Esophagus muscularis mucosa (tissue), 4 donors: ENCODE measurements at regions of chr2 and their contacts with region 1.

Region 1: GRCh38 chr2:85728883-85729824 is 24.6 kb upstream of the ATOH8 start:
- DNase-seq: peak; percentile 98
- H3K4me3 ChIP-seq: no peak overlapping the region
- H3K27ac ChIP-seq: peak overlapping the region in 2 of 4 donors; percentile 0 to 30
- H3K4me1 ChIP-seq: peaks cover 21 to 33% (median 28%) of the 10 kb centered on the region in 4 donors
- H3K27me3 ChIP-seq: no peaks in the 10 kb centered on the region
- CTCF ChIP-seq: peak; percentile 94 to 98 (median 98)
- EP300 ChIP-seq: no peak
- POLR2A ChIP-seq: no peak

Region 2: DNA sequence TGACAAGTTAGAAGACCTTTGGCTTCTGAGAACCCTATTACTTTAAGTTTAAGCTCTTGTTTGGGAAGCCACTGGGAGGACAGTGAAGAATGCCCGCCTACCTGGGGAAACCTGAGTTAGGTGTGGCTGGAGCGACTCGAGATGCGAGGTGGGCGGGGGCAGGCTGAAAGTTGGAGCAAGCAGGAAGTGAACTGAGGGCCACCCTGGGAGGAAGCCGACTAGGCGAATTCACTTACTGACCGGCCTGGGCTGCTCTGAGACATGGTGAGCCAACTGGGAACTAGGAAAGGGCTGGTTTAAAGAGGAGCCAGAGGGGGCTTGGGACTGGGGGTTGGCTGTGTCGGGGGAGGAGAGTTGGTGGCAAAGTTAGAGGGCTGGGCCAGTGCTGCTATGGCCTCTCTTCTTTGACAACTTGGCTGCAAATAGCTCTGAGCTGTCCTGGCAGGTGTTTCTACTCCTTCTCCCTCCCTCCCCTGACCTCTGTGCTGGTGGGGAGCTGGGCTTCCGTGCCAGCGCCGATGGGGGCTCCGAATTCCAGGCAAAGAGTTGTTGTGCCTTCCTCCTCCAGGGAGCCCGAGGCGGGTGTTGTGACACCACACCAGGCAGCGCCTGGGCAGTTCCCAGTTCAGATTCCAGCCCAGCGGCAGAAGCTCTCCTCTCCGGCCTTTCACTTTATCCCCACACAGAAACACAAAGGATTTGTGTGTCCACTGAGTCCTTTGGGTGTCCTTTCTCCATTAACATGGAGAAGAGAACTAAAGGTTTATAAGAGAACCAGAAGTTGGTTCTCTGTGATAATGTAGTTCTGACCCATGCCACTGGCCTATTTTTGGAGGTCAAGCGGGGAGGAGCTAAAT is 151.5 kb before region 1 on chr2 and contains the start of gene VAMP8:
- intact Hi-C with region 1: no loop called
- DNase-seq: no peak
- H3K4me3 ChIP-seq: peak within 1 kb of the TSS; percentile 34 to 54 (median 36)
- H3K27ac ChIP-seq: peak within 1 kb of the TSS; percentile 53 to 74 (median 70)
- H3K4me1 ChIP-seq: peaks cover 20 to 42% (median 38%) of the 10 kb centered on the region in 4 donors
- H3K27me3 ChIP-seq: no peaks in the 10 kb centered on the region
- CTCF ChIP-seq: no peak
- EP300 ChIP-seq: no peak
- POLR2A ChIP-seq: no peak
- total RNA-seq, gene VAMP8: 4.8 to 15.6 (median 8.3) TPM

Region 3: GRCh38 chr2:85797921-85798320 is 68.8 kb after region 1 on chr2:
- intact Hi-C with region 1: loop called (anchors 1 kb)
- DNase-seq: no peak
- H3K4me3 ChIP-seq: no peak overlapping the region
- H3K27ac ChIP-seq: no peak overlapping the region
- H3K4me1 ChIP-seq: peaks cover 49 to 51% (median 51%) of the 10 kb centered on the region in 4 donors
- H3K27me3 ChIP-seq: no peaks in the 10 kb centered on the region
- CTCF ChIP-seq: peak; percentile 62 to 65 (median 63)
- EP300 ChIP-seq: no peak
- POLR2A ChIP-seq: no peak

Region 4: DNA sequence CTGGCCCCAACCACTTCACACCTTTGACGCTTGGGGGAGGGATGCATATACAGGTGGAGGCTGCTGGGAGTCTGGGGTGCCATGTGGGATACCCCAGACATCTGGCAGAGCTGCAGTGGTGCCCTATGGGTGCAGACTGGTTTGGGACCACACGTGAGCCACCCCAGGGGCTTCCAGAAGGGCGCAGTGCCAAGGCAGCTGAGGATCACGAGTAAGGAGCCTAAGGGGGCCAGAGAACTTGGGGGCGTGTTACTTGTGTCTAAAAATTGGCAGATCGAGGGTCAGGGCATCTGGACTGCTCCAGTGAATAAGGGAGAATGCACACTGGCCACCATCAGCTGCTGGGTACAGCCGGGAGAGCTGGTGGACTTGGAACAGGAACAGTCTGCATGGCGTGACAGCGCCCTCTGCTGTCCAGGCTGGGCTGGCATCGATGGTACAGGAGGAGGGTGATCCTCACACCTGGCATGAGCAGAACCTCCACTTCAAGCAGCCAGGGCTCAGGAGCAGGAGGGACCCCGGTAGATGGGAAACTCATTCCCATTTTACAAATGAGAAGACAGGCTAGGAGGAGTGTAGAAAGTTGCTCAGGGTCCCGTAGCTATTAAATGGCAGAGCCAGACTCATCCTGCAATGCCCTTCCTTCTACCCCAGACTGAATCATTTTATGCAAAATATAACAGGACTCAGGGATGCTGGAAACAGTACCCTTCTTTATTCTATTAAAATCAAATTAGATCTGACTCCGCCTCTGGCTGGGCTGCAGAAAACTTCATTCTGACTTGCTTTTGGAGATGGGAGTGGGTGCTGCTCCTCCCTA is 85.0 kb after region 1 on chr2:
- intact Hi-C with region 1: loop called (anchors 2 kb)
- DNase-seq: peak; percentile 97
- H3K4me3 ChIP-seq: no peak overlapping the region
- H3K27ac ChIP-seq: no peak overlapping the region
- H3K4me1 ChIP-seq: peaks cover 15 to 23% (median 17%) of the 10 kb centered on the region in 4 donors
- H3K27me3 ChIP-seq: no peaks in the 10 kb centered on the region
- CTCF ChIP-seq: peak; percentile 91 to 92 (median 91)
- EP300 ChIP-seq: no peak
- POLR2A ChIP-seq: no peak

Region 5: DNA sequence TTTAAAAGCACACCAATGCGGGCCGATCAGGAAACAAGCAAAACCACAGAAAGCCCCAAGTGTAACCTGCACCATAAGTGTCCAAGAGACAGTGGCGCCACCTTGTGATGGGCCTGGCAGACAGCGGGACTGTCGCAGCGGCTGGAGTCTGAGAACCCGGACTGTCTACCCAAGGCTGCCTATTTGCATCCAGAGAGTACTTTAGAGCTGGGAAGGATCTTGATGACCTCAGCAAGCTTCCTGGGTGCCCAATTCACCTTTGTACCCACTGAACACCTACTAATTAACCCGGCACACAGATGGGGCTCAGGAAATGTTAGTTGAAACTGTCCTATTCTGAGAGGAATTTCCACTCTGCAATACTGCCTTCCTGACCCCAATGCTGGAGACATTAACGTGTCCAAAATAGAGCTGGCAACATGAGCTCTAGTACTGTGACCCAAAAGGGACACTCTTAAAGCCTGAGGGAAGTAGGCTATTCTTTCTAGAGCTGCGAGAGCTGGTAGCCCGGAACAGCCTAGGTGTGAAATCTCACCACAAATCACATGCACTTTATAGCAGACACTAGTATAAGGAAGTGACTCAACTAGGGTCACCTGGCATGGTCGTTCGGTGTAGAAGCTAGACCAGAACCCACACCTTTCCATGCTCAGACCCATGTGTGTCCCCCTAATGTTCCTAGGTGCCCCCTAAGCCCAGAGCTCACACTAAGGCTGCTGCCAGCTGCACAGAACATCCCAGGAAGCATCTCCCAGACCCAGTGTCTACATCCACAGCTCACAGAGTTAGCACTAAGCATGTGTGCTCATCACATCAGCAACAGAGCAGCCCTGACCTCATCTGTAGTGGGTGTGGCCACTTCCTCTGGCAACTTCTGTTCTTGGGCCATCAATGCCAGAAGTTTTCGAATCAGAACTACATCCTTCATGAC is 351.1 kb after region 1 on chr2:
- intact Hi-C with region 1: loop called (anchors 10 kb)
- DNase-seq: no peak
- H3K4me3 ChIP-seq: no peak overlapping the region
- H3K27ac ChIP-seq: no peak overlapping the region
- H3K4me1 ChIP-seq: peaks cover 8 to 39% (median 26%) of the 10 kb centered on the region in 4 donors
- H3K27me3 ChIP-seq: no peaks in the 10 kb centered on the region
- CTCF ChIP-seq: peak; percentile 75 to 84 (median 81)
- EP300 ChIP-seq: no peak
- POLR2A ChIP-seq: no peak